ENCODE measurements at regions of chr17 and their contacts with region 1.

Region 1: GRCh38 chr17:82553210-82553930 is 33.8 kb downstream of the FOXK2 start:
- DNase-seq: no peak
- H3K4me3 ChIP-seq: no peak overlapping the region
- H3K27me3 ChIP-seq: no peaks in the 10 kb centered on the region
- CTCF ChIP-seq: no peak

Region 2: GRCh38 chr17:82536512-82537201 is 16.7 kb before region 1 on chr17:
- CTCF ChIA-PET with region 1: interaction called, 11 read pairs
- POLR2A ChIA-PET with region 1: no interaction called
- DNase-seq: no peak
- H3K4me3 ChIP-seq: peak overlapping the region; percentile 2; the same call in 1 of the 2 replicates
- H3K27me3 ChIP-seq: no peaks in the 10 kb centered on the region
- CTCF ChIP-seq: no peak